Mammary epithelial cell (primary cell): ENCODE measurements at regions of chr16 and their contacts with region 1.

Region 1: DNA sequence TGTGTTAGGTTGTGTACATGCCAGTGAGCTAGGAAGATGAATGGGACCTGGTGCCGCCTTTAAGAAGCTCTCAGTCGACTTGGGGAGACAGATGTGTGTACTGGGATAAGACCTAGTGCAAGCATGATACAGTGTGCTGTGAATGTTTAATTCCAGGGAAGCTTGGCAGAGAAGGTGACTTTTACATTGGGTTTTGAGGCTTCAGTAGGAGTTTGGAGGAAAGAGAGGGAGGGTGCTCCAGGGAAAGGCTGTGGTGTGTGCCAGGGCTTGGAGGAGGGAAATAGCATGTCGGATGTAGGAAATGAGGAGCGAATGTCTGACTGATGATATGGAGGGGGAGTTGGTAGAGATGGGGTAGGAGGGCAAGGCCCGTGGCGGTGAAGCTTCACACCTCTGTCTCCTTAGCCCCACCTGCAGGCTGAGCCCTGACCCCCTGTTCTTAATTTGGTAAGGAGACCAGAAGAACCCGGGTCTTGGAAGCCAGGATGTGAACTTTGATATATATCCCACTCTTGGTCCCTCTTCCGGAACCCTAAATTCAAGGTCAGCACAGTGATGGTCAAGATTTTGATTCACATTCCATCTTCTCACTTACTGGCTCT is 76.6 kb downstream of the PLCG2 start:
- DNase-seq: no peak
- H3K4me3 ChIP-seq: no peak overlapping the region
- H3K27ac ChIP-seq: no peak overlapping the region
- H3K4me1 ChIP-seq: no peaks in the 10 kb centered on the region
- H3K27me3 ChIP-seq: no peaks in the 10 kb centered on the region
- CTCF ChIP-seq: no peak

Region 2: DNA sequence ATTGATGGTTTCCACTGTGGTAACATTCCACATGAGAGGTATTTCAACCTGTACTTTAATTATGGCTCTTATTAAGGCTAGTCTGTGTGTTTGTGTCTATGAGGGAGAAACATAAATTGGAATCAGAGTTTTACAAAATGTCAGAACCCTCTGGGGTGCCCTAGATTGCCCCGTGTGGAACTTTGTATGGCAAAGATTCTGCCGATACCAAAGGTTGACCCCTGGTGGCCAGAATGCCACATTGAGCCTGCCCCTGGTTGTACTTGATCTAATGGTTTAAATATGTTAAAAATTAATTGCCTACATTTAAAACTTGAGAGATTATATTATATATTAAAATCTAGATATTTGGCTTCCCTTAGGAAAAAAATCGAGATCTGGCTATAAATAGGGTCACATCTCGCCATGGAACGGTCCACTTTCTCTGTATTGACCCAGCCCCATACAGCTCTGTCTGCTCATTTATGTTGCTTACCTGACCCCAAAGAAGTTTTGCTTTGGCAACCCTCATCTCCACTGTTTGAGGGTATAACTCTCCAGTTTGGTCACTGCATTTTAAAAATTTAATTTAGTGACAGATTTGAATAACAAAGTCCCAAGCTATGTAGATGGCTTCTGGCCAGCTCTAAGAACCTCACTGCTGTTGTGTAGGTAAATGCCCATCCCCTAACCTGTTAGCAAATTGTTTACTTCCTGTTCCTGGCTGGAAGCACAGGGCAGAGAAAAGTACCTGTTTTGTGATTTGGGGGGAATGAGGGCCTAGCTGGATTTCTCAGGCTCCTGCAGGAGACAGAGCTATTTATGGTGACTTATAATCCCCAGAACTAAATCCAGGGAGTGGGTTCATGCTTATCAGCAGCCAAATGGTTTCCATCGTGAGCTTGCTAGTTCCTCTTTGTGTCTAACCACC is 18.4 kb after region 1 on chr16:
- CTCF ChIA-PET with region 1: interaction called, 11 read pairs
- dilution Hi-C with region 1: no loop called
- in situ Hi-C with region 1: no loop called
- intact Hi-C with region 1: no loop called
- DNase-seq: peak; percentile 27
- H3K4me3 ChIP-seq: no peak overlapping the region
- H3K27ac ChIP-seq: no peak overlapping the region
- H3K4me1 ChIP-seq: no peaks in the 10 kb centered on the region
- H3K27me3 ChIP-seq: no peaks in the 10 kb centered on the region
- CTCF ChIP-seq: peak; percentile 93 to 96